A673 (cell line): ENCODE measurements at regions of chr11 and their contacts with region 1.

Region 1: GRCh38 chr11:35822815-35823495 is 120.9 kb upstream of the LDLRAD3 start:
- DNase-seq: peak; percentile 59
- H3K4me3 ChIP-seq: no peak overlapping the region
- H3K27ac ChIP-seq: no peak overlapping the region
- H3K4me1 ChIP-seq: peaks cover 13% of the 10 kb centered on the region
- H3K27me3 ChIP-seq: no peaks in the 10 kb centered on the region
- CTCF ChIP-seq: no peak

Region 2: GRCh38 chr11:35485656-35486322 is 337.2 kb before region 1 on chr11:
- CTCF ChIA-PET with region 1: interaction called, 27 read pairs
- POLR2A ChIA-PET with region 1: no interaction called
- intact Hi-C with region 1: no loop called
- DNase-seq: peak; percentile 97
- H3K4me3 ChIP-seq: no peak overlapping the region
- H3K27ac ChIP-seq: no peak overlapping the region
- H3K4me1 ChIP-seq: no peaks in the 10 kb centered on the region
- H3K27me3 ChIP-seq: peaks cover 20% of the 10 kb centered on the region
- CTCF ChIP-seq: peak; percentile 100

Region 3: GRCh38 chr11:35794850-35795249 is 28.1 kb before region 1 on chr11:
- CTCF ChIA-PET with region 1: interaction called, 30 read pairs
- POLR2A ChIA-PET with region 1: no interaction called
- intact Hi-C with region 1: no loop called
- DNase-seq: no peak
- H3K4me3 ChIP-seq: no peak overlapping the region
- H3K27ac ChIP-seq: no peak overlapping the region
- H3K4me1 ChIP-seq: peaks cover 17% of the 10 kb centered on the region
- H3K27me3 ChIP-seq: no peaks in the 10 kb centered on the region
- CTCF ChIP-seq: no peak

Region 4: GRCh38 chr11:35838071-35838470 is 15.1 kb after region 1 on chr11:
- CTCF ChIA-PET with region 1: interaction called, 37 read pairs
- POLR2A ChIA-PET with region 1: no interaction called
- intact Hi-C with region 1: no loop called
- DNase-seq: no peak
- H3K4me3 ChIP-seq: no peak overlapping the region
- H3K27ac ChIP-seq: no peak overlapping the region
- H3K4me1 ChIP-seq: peaks cover 6% of the 10 kb centered on the region
- H3K27me3 ChIP-seq: no peaks in the 10 kb centered on the region
- CTCF ChIP-seq: no peak

Region 5: DNA sequence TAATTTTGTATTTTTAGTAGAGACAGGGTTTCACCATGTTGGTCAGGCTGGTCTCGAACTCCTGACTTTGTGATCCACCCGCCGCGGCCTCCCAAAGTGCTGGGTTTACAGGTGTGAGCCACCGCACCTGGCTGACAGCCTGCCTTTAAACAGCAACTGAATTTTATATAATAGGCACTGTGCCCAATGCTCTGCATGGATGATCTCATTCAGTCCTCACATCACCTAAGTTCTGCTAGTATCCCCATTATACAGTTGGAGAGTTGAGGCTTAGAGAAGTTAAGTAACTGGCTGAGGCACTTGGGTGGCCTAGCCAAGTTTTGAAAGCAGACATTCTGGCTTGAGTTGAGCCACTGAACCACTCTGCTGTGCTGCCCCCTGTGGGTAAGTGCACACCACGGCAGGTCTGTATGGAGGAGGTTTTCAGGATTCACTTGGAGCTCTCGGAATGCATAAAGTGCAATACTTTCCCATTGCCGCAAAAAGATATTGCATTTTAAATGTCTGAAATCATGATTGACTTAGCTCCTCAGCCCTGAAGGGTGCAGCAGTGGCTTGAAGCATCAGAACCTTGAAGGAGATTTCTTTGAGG is 233.3 kb after region 1 on chr11:
- CTCF ChIA-PET with region 1: interaction called, 22 read pairs
- POLR2A ChIA-PET with region 1: no interaction called
- intact Hi-C with region 1: loop called (anchors 1 kb)
- DNase-seq: peak; percentile 87
- H3K4me3 ChIP-seq: no peak overlapping the region
- H3K27ac ChIP-seq: no peak overlapping the region
- H3K4me1 ChIP-seq: peaks cover 4% of the 10 kb centered on the region
- H3K27me3 ChIP-seq: no peaks in the 10 kb centered on the region
- CTCF ChIP-seq: peak; percentile 100

Region 6: GRCh38 chr11:36258730-36259360 is 435.9 kb after region 1 on chr11:
- CTCF ChIA-PET with region 1: interaction called, 55 read pairs
- POLR2A ChIA-PET with region 1: no interaction called
- intact Hi-C with region 1: loop called (anchors 2 kb)
- DNase-seq: peak; percentile 93
- H3K4me3 ChIP-seq: no peak overlapping the region
- H3K27ac ChIP-seq: no peak overlapping the region
- H3K4me1 ChIP-seq: no peaks in the 10 kb centered on the region
- H3K27me3 ChIP-seq: peaks cover 20% of the 10 kb centered on the region
- CTCF ChIP-seq: peak; percentile 99

Region 7: DNA sequence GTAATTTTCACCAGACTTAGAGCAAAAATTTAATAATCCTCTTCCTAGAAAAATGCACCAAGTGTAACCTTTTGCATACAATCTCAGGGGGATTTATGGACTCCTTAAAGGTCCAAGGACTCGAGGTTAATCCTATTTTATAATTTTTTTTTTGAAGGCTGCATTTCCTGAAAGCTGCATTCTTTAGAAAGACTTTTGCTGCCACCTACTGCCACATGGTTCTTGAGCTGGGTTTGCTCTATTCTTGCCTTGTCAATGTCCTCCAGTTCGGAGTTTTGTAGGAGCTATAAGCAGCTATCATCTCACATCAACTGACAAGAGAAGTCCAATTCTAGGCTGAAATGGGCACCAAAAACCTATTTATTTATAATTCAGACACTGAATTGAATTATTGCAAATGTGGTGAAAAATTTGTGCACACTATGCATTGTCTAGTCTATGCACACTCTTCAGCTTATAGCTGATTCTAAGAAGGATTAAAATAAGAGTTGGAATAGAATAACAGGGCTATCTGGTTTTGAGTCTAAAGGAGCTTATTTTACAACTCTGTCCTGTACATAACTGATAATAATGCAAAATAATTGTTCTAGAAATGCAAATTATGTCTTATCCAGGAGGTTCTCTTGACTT is 655.9 kb after region 1 on chr11:
- CTCF ChIA-PET with region 1: interaction called, 22 read pairs
- POLR2A ChIA-PET with region 1: no interaction called
- intact Hi-C with region 1: no loop called
- DNase-seq: peak; percentile 93
- H3K4me3 ChIP-seq: no peak overlapping the region
- H3K27ac ChIP-seq: no peak overlapping the region
- H3K4me1 ChIP-seq: peaks cover 14% of the 10 kb centered on the region
- H3K27me3 ChIP-seq: no peaks in the 10 kb centered on the region
- CTCF ChIP-seq: peak; percentile 98